Aorta (tissue), 5 donors: ENCODE measurements at regions of chr18 and their contacts with region 1.

Region 1: GRCh38 chr18:5097116-5097703 is 99.8 kb downstream of the AKAIN1 start:
- DNase-seq: no peak
- ATAC-seq: no peak
- H3K4me3 ChIP-seq: no peak overlapping the region
- H3K27ac ChIP-seq: no peak overlapping the region
- H3K4me1 ChIP-seq: no peaks in the 10 kb centered on the region
- H3K27me3 ChIP-seq: no peaks in the 10 kb centered on the region

Region 2: GRCh38 chr18:3931542-3932112 is 1165.6 kb before region 1 on chr18:
- intact Hi-C with region 1: loop called in 1 of 2 experiments (anchors 10 kb)
- DNase-seq: no peak
- ATAC-seq: no peak
- H3K4me3 ChIP-seq: no peak overlapping the region
- H3K27ac ChIP-seq: no peak overlapping the region
- H3K4me1 ChIP-seq: no peaks in the 10 kb centered on the region
- H3K27me3 ChIP-seq: no peaks in the 10 kb centered on the region

Region 3: GRCh38 chr18:4854671-4855070 is 242.5 kb before region 1 on chr18:
- intact Hi-C with region 1: no loop called
- DNase-seq: no peak
- ATAC-seq: no peak
- H3K4me3 ChIP-seq: no peak overlapping the region
- H3K27ac ChIP-seq: no peak overlapping the region
- H3K4me1 ChIP-seq: no peaks in the 10 kb centered on the region
- H3K27me3 ChIP-seq: no peaks in the 10 kb centered on the region

Region 4: DNA sequence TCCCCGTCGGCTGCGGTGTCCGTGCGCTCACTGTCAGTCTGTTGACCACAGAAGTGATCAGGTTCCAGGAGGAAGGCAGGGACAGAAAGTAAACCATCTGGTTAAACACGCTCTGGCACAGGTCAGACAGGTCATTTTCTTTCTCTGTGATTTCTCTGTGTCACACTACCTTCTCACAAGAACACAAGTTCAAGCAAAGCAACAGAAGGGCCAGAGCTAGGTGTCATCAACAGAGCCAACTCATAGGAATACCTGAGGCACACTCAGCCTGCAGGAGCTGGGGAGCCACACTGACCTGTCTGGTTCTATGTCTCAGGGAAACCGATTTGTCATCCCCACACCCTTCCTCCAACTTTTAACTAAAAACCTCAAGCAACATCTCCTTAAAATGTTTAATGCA is 313.4 kb after region 1 on chr18:
- intact Hi-C with region 1: no loop called
- DNase-seq: no peak
- ATAC-seq: no peak
- H3K4me3 ChIP-seq: no peak overlapping the region
- H3K27ac ChIP-seq: no peak overlapping the region
- H3K4me1 ChIP-seq: no peaks in the 10 kb centered on the region
- H3K27me3 ChIP-seq: no peaks in the 10 kb centered on the region